ENCODE measurements at regions of chr16 and their contacts with region 1.

Region 1: DNA sequence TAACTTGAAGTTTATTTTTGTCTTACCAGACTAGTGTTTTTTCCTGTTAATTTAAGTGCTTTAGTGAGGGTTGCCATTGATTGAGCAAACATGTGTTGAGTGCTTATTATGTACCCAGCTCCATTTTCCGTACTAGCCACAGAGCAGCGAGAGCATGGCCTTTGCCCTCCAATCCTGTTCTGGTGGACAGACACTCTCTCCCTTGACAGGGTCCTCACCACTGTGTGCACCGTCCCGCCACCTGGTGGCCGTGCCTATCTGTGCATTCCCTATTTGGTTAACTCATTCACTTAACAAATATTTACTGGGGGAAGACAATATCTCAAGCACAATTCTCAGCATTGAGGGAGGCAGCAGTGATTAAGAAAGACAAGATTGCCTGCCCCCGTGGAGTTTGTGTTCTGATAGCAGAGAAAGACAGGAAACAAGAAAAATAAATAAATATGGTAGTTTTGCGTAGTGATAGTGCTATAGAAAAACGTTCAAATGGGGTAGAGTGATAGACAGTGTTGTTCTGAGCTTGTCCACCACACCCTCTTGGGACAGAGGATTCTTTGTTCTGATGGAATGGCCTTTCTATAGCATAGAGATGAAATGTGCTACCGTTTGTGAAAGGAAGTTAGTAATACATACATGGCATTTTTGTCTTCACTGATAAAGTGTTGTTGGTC is 13.0 kb downstream of the CDH13 start:
- DNase-seq: peak in 28 of 35 experiments; percentile 7 to 64 (median 34)
- ATAC-seq: peak in 3 of 4 experiments; percentile 56 to 64 (median 62)
- H3K4me3 ChIP-seq: no peak overlapping the region
- H3K4me3 Mint-ChIP-seq: no peak overlapping the region
- H3K27ac ChIP-seq: no peak overlapping the region
- H3K27ac Mint-ChIP-seq: no peak overlapping the region
- H3K4me1 ChIP-seq: peaks cover 0 to 3% of the 10 kb centered on the region in 2 experiments
- H3K4me1 Mint-ChIP-seq: peaks cover 0 to 6% (median 5%) of the 10 kb centered on the region in 3 donors
- H3K27me3 ChIP-seq: no peaks in the 10 kb centered on the region
- H3K27me3 Mint-ChIP-seq: peaks cover 2 to 5% of the 10 kb centered on the region in 2 donors

Region 2: GRCh38 chr16:82609140-82609539 is 30.7 kb before region 1 on chr16:
- CTCF ChIA-PET with region 1: no interaction called
- POLR2A ChIA-PET with region 1: no interaction called
- DNase-seq: no peak
- ATAC-seq: no peak
- H3K4me3 ChIP-seq: no peak overlapping the region
- H3K4me3 Mint-ChIP-seq: no peak overlapping the region
- H3K27ac ChIP-seq: no peak overlapping the region
- H3K27ac Mint-ChIP-seq: no peak overlapping the region
- H3K4me1 ChIP-seq: no peaks in the 10 kb centered on the region
- H3K4me1 Mint-ChIP-seq: no peaks in the 10 kb centered on the region
- H3K27me3 ChIP-seq: peaks cover 0 to 6% of the 10 kb centered on the region in 2 experiments
- H3K27me3 Mint-ChIP-seq: peaks cover 11 to 13% of the 10 kb centered on the region in 2 donors

Region 3: GRCh38 chr16:82653550-82654511 is 14.0 kb after region 1 on chr16:
- CTCF ChIA-PET with region 1: interaction called, 4 to 46 read pairs
- POLR2A ChIA-PET with region 1: no interaction called
- DNase-seq: peak in 33 of 35 experiments; percentile 8 to 83 (median 26)
- ATAC-seq: peak; percentile 69 to 71 (median 70)
- H3K4me3 ChIP-seq: no peak overlapping the region
- H3K4me3 Mint-ChIP-seq: peak overlapping the region; percentile 37 to 65 (median 44)
- H3K27ac ChIP-seq: peak overlapping the region; percentile 76
- H3K27ac Mint-ChIP-seq: peak overlapping the region; percentile 88 to 95
- H3K4me1 ChIP-seq: peaks cover 27 to 83% of the 10 kb centered on the region in 2 experiments
- H3K4me1 Mint-ChIP-seq: peaks cover 79 to 97% (median 90%) of the 10 kb centered on the region in 3 donors
- H3K27me3 ChIP-seq: no peaks in the 10 kb centered on the region
- H3K27me3 Mint-ChIP-seq: no peaks in the 10 kb centered on the region

Region 4: GRCh38 chr16:82715833-82716232 is 76.0 kb after region 1 on chr16:
- CTCF ChIA-PET with region 1: no interaction called
- POLR2A ChIA-PET with region 1: no interaction called
- DNase-seq: no peak
- ATAC-seq: no peak
- H3K4me3 ChIP-seq: no peak overlapping the region
- H3K4me3 Mint-ChIP-seq: no peak overlapping the region
- H3K27ac ChIP-seq: no peak overlapping the region
- H3K27ac Mint-ChIP-seq: no peak overlapping the region
- H3K4me1 ChIP-seq: no peaks in the 10 kb centered on the region
- H3K4me1 Mint-ChIP-seq: no peaks in the 10 kb centered on the region
- H3K27me3 ChIP-seq: no peaks in the 10 kb centered on the region
- H3K27me3 Mint-ChIP-seq: no peaks in the 10 kb centered on the region